Caco-2 (cell line): ENCODE measurements at regions of chr12 and their contacts with region 1.

Region 1: DNA sequence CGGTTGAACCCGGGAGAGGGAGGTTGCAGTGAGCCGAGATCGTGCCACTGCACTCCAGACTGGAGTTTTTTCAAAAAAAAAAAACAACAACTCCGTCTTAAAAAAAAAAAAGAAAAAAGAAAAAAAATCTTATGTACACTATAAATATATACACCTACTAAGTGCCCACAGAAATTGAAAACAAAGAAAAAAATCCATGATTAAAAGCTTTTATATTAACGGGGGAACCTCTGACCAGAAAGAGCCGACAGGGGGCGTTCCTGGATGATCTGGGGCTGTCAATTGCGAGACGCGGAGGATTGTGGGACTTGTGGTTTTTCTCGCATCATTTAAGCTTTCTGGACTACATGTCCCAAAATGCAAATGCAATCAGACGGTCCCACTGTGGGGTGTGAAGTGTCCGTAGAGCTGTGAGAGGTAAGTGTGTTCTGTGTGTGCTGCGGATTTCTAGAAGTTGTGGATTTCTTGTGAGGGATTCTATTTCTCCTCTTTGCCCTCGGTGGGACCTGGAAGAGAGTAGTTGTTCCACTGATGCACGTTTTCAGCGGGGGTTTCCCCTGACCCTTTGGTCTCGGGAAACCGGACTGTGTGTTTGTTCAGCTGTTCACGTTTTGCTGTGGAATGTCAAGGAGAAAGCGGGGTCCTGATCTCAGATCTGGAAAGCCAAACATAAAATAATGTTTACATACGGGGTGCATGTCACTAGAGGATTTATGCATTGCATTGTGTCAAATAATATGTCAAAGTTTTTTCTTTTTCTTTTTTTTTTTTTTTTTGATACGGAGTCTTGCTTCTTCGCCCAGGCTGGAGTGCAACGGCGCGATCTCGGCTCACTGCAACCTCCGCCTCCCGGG is at the start of gene SIRT4:
- DNase-seq: peak; percentile 89
- H3K4me3 ChIP-seq: peak within 1 kb of the TSS; percentile 70
- H3K4me3 Mint-ChIP-seq: peak within 1 kb of the TSS; percentile 91
- H3K27ac Mint-ChIP-seq: peak within 1 kb of the TSS; percentile 93
- H3K4me1 ChIP-seq: peaks cover 5% of the 10 kb centered on the region; the same call in 1 of the 2 replicates
- H3K4me1 Mint-ChIP-seq: no peaks in the 10 kb centered on the region
- H3K27me3 ChIP-seq: no peaks in the 10 kb centered on the region
- H3K27me3 Mint-ChIP-seq: no peaks in the 10 kb centered on the region
- CTCF ChIP-seq: peak; percentile 84 to 86
- total RNA-seq, gene SIRT4: 2.1 and 3.6 TPM in 2 replicates

Region 2: DNA sequence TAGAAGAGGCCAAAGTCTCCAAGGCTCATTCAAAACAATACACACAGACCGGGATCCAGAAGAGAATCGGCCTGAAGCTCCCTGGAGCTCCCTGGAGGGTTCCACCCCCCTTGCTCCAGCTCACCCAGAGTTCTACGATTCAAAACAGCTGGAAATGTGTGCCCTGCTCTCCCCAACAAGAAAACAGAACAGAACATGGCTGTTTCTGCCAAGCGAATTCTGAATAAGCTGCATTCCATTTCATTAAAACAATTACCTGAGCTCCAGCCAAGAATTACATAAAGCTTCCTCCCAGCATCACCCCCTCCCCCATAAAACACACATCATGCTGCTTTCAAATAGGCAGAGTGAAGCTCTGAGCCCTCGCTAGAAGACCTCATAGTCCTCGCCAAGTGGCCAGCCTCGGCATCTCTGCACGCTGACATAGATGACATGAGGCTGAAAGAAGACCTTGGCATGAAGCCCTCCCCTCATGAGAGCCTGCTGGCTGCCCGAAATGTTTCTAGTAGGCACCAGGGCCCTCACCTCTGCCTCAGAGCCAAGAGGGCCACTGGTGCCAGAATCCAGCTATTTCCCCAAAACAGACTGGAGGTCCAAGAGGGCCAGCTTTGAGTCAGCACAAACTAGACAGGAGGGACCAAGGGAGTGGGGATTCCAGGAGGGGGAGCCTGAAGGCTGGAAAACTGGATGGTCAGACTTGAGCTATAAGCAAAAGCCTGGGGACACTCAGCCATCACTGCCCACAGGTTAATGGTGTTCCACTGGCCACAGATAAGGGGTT is 45.0 kb before region 1 on chr12:
- CTCF ChIA-PET with region 1: no interaction called
- POLR2A ChIA-PET with region 1: no interaction called
- intact Hi-C with region 1: no loop called
- DNase-seq: no peak
- H3K4me3 ChIP-seq: no peak overlapping the region
- H3K4me3 Mint-ChIP-seq: no peak overlapping the region
- H3K27ac Mint-ChIP-seq: peak overlapping the region; percentile 76
- H3K4me1 ChIP-seq: peaks cover 27% of the 10 kb centered on the region
- H3K4me1 Mint-ChIP-seq: peaks cover 21% of the 10 kb centered on the region
- H3K27me3 ChIP-seq: no peaks in the 10 kb centered on the region
- H3K27me3 Mint-ChIP-seq: no peaks in the 10 kb centered on the region
- CTCF ChIP-seq: no peak

Region 3: GRCh38 chr12:120317224-120318105 is 15.3 kb after region 1 on chr12:
- CTCF ChIA-PET with region 1: interaction called, 27 read pairs
- POLR2A ChIA-PET with region 1: interaction called, 14 read pairs
- intact Hi-C with region 1: loop called (anchors 1 kb)
- DNase-seq: peak; percentile 100
- H3K4me3 ChIP-seq: peak overlapping the region; percentile 49
- H3K4me3 Mint-ChIP-seq: peak overlapping the region; percentile 95
- H3K27ac Mint-ChIP-seq: peak overlapping the region; percentile 99
- H3K4me1 ChIP-seq: peaks cover 22% of the 10 kb centered on the region
- H3K4me1 Mint-ChIP-seq: peaks cover 13% of the 10 kb centered on the region
- H3K27me3 ChIP-seq: no peaks in the 10 kb centered on the region
- H3K27me3 Mint-ChIP-seq: no peaks in the 10 kb centered on the region
- CTCF ChIP-seq: peak; percentile 52 to 77

Region 4: GRCh38 chr12:120580787-120581723 is 278.9 kb after region 1 on chr12 and contains the start of gene POP5:
- CTCF ChIA-PET with region 1: no interaction called
- POLR2A ChIA-PET with region 1: no interaction called
- intact Hi-C with region 1: no loop called
- DNase-seq: peak; percentile 96 to 97
- H3K4me3 ChIP-seq: peak within 1 kb of the TSS; percentile 86
- H3K4me3 Mint-ChIP-seq: peak within 1 kb of the TSS; percentile 99
- H3K27ac Mint-ChIP-seq: peak within 1 kb of the TSS; percentile 96
- H3K4me1 ChIP-seq: no peaks in the 10 kb centered on the region
- H3K4me1 Mint-ChIP-seq: peaks cover 15% of the 10 kb centered on the region
- H3K27me3 ChIP-seq: no peaks in the 10 kb centered on the region
- H3K27me3 Mint-ChIP-seq: no peaks in the 10 kb centered on the region
- CTCF ChIP-seq: no peak
- total RNA-seq, gene POP5: 49.5 and 53.9 TPM in 2 replicates